ENCODE measurements at regions of chr7 and their contacts with region 1.

Region 1: DNA sequence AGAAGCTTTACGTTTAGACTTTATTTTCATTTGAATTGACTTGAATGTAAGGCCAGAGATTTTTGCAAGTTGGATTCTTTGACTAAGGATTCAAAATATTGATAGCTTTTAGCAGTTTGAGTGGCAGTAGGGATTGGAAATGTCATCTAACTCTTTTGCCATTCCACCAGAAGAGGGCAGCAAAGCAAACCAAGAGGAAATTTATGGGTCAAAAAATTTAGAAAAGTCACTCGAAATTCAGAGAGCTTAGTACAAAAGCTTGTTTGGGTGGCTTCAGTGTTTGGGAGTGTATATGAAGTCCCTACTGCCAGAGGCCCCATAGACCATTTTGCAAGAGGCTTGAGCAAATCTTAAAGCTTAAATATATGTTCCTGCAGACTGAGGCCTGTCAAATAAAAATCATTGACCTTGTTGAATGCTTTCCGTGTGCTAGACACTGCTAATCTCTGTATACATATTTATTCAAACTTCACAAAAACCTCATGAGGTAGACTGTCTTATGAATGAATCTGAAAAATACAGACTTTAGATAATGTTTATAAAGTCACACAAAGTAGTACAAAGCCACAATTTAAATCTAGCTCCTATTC is 44.6 kb upstream of the RSBN1L start:
- DNase-seq: no peak
- ATAC-seq: no peak
- H3K4me3 ChIP-seq: no peak overlapping the region
- H3K27ac ChIP-seq: no peak overlapping the region
- H3K4me1 ChIP-seq: peaks cover 0 to 11% (median 0%) of the 10 kb centered on the region in 12 donors
- H3K27me3 ChIP-seq: no peaks in the 10 kb centered on the region
- CTCF ChIP-seq: peak; percentile 57 to 81 (median 76)
- POLR2A ChIP-seq: no peak

Region 2: DNA sequence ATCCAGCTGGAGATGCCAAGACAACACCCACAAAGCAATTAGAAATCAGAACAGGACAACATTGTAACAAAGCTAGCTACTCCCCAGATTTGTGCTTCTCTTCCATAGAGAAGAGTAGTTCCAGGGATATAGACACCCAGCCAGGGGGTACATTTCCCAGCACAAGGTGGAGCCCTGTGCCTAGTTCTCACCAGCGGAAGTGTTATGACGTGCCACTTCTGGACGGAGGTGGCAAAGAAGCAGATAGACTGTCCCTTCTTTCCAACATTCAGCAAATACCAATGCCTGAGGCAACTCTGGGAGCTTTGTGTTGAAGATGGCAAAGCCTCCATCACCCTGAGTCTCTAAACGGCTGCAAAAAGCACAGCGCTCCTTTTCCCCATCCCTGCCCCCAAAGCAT is 212.1 kb before region 1 on chr7:
- intact Hi-C with region 1: loop called in 1 of 10 experiments (anchors 10 kb)
- DNase-seq: peak in 4 of 5 donors; percentile 36 to 58 (median 52)
- ATAC-seq: peak; percentile 64 to 93 (median 90)
- H3K4me3 ChIP-seq: no peak overlapping the region
- H3K27ac ChIP-seq: no peak overlapping the region
- H3K4me1 ChIP-seq: peaks cover 0 to 16% (median 0%) of the 10 kb centered on the region in 12 donors
- H3K27me3 ChIP-seq: no peaks in the 10 kb centered on the region
- CTCF ChIP-seq: peak; percentile 20 to 64 (median 46)
- POLR2A ChIP-seq: no peak

Measured in heart left ventricle (tissue), 16 donors.